ENCODE measurements at regions of chr13 and their contacts with region 1.

Region 1: GRCh38 chr13:41061075-41061913 is at the start of gene WBP4:
- DNase-seq: peak; percentile 91
- ATAC-seq: peak; percentile 75
- H3K4me3 Mint-ChIP-seq: peak within 1 kb of the TSS; percentile 100
- H3K27ac Mint-ChIP-seq: peak within 1 kb of the TSS; percentile 100
- H3K4me1 Mint-ChIP-seq: peaks cover 39% of the 10 kb centered on the region
- H3K27me3 Mint-ChIP-seq: peaks cover 2% of the 10 kb centered on the region
- CTCF ChIP-seq: no peak
- total RNA-seq, gene WBP4: 8.6 and 9.0 TPM in 2 replicates

Region 2: DNA sequence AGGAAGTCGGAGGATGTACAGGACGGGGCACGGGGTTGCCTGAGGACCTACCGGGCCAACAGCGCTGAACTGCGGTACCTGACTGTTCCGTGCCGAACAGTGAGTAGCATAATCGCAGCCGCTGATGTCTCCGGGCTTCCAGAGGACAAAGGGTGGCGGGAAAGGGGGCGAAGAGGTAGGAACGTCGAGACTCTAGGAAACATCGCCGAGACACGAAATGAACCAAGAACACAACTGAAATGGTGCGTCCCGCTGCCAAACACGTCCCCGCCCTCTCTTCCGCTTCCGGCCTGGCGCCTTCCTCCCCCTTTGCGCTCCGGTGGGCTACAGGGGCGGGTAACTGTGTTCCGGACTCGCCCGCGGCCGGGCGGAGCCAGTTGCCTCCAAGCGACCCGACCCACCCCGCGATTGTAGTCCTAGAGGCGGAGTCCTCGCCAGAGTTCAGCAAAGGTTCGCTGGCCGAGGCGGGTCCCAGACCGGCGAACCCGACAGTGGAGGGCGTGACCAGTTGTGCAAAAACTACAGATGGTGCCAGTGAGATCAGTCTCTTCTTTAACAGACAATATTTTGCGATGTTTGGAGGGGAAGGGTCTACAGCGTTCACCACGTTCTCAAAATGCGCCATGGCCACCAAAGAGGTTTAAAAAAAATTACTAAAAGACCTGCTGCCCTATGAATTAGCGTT is 290.2 kb before region 1 on chr13 and contains the start of gene MRPS31:
- CTCF ChIA-PET with region 1: no interaction called
- POLR2A ChIA-PET with region 1: interaction called, 14 read pairs
- intact Hi-C with region 1: loop called (anchors 1 kb)
- DNase-seq: peak; percentile 94
- ATAC-seq: peak; percentile 100
- H3K4me3 Mint-ChIP-seq: peak within 1 kb of the TSS; percentile 98
- H3K27ac Mint-ChIP-seq: peak within 1 kb of the TSS; percentile 94
- H3K4me1 Mint-ChIP-seq: peaks cover 30% of the 10 kb centered on the region
- H3K27me3 Mint-ChIP-seq: no peaks in the 10 kb centered on the region
- CTCF ChIP-seq: no peak
- total RNA-seq, gene MRPS31: 29.4 and 30.5 TPM in 2 replicates

Region 3: GRCh38 chr13:40961214-40961613 is 100.1 kb before region 1 on chr13:
- CTCF ChIA-PET with region 1: no interaction called
- POLR2A ChIA-PET with region 1: interaction called, 15 read pairs
- intact Hi-C with region 1: no loop called
- DNase-seq: no peak
- ATAC-seq: peak; percentile 75
- H3K4me3 Mint-ChIP-seq: peak overlapping the region; percentile 73
- H3K27ac Mint-ChIP-seq: peak overlapping the region; percentile 83
- H3K4me1 Mint-ChIP-seq: peaks cover 76% of the 10 kb centered on the region
- H3K27me3 Mint-ChIP-seq: no peaks in the 10 kb centered on the region
- CTCF ChIP-seq: no peak

Region 4: GRCh38 chr13:41019011-41019487 is 42.2 kb before region 1 on chr13 and contains the start of gene ELF1:
- CTCF ChIA-PET with region 1: interaction called, 11 read pairs
- POLR2A ChIA-PET with region 1: interaction called, 118 read pairs
- intact Hi-C with region 1: loop called (anchors 1 kb)
- DNase-seq: peak; percentile 26
- ATAC-seq: peak; percentile 87
- H3K4me3 Mint-ChIP-seq: peak within 1 kb of the TSS; percentile 94
- H3K27ac Mint-ChIP-seq: peak within 1 kb of the TSS; percentile 99
- H3K4me1 Mint-ChIP-seq: peaks cover 46% of the 10 kb centered on the region
- H3K27me3 Mint-ChIP-seq: no peaks in the 10 kb centered on the region
- CTCF ChIP-seq: no peak
- total RNA-seq, gene ELF1: 129 and 136 TPM in 2 replicates

Region 5: DNA sequence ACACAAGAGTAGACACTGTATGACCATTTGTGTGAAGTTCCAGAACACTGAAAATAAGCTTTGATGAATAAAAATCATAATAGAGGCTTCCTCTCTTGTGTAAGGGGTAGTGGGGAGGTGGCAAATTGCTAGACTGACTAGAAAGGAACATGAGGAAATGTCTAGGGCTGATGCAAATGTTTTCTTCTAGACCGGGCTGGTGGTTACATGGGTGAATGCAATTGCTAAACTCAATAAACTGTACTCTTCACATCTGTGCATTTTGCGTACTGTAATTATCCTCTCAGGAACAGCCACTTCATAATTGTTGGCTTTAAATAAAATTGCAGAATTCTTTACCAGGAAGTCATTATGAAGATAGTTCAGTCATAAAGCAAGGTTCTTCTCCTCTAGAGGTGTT is 138.2 kb after region 1 on chr13:
- CTCF ChIA-PET with region 1: interaction called, 3 read pairs
- POLR2A ChIA-PET with region 1: interaction called, 7 read pairs
- intact Hi-C with region 1: loop called (anchors 1 kb)
- DNase-seq: no peak
- ATAC-seq: peak; percentile 90
- H3K4me3 Mint-ChIP-seq: peak overlapping the region; percentile 55
- H3K27ac Mint-ChIP-seq: peak overlapping the region; percentile 87
- H3K4me1 Mint-ChIP-seq: peaks cover 47% of the 10 kb centered on the region
- H3K27me3 Mint-ChIP-seq: no peaks in the 10 kb centered on the region
- CTCF ChIP-seq: no peak

Region 6: GRCh38 chr13:41652727-41653361 is 591.5 kb after region 1 on chr13:
- CTCF ChIA-PET with region 1: no interaction called
- POLR2A ChIA-PET with region 1: no interaction called
- intact Hi-C with region 1: no loop called
- DNase-seq: no peak
- ATAC-seq: no peak
- H3K4me3 Mint-ChIP-seq: no peak overlapping the region
- H3K27ac Mint-ChIP-seq: no peak overlapping the region
- H3K4me1 Mint-ChIP-seq: peaks cover 9% of the 10 kb centered on the region
- H3K27me3 Mint-ChIP-seq: peaks cover 41% of the 10 kb centered on the region
- CTCF ChIP-seq: no peak

Region 7: GRCh38 chr13:42271337-42272114 is 1210.2 kb after region 1 on chr13:
- CTCF ChIA-PET with region 1: no interaction called
- POLR2A ChIA-PET with region 1: interaction called, 3 read pairs
- intact Hi-C with region 1: loop called (anchors 2 kb)
- DNase-seq: peak; percentile 85
- ATAC-seq: peak; percentile 83
- H3K4me3 Mint-ChIP-seq: peak overlapping the region; percentile 97
- H3K27ac Mint-ChIP-seq: peak overlapping the region; percentile 97
- H3K4me1 Mint-ChIP-seq: peaks cover 54% of the 10 kb centered on the region
- H3K27me3 Mint-ChIP-seq: no peaks in the 10 kb centered on the region
- CTCF ChIP-seq: no peak

Measured in activated B cell treated with CpG ODN at 0.5 μM for 24 hours (primary cell).